ENCODE measurements at regions of chr20 and their contacts with region 1.

Region 1: GRCh38 chr20:9068851-9069663 is at the start of gene PLCB4:
- DNase-seq: peak; percentile 66
- ATAC-seq: peak; percentile 28
- H3K4me3 ChIP-seq: peak within 1 kb of the TSS; percentile 92
- H3K27ac ChIP-seq: peak within 1 kb of the TSS; percentile 68
- H3K4me1 ChIP-seq: peaks cover 6% of the 10 kb centered on the region
- H3K27me3 ChIP-seq: no peaks in the 10 kb centered on the region
- CTCF ChIP-seq: no peak
- POLR2A ChIP-seq: 0 out of 2 replicates have a peak, but pooled peaks have one; percentile 13
- RAD21 ChIP-seq: no peak
- total RNA-seq, gene PLCB4: 24.0 and 28.3 TPM in 2 replicates

Region 2: GRCh38 chr20:8756410-8756809 is 312.6 kb before region 1 on chr20:
- CTCF ChIA-PET with region 1: interaction called, 4 read pairs
- POLR2A ChIA-PET with region 1: no interaction called
- dilution Hi-C with region 1: no loop called
- in situ Hi-C with region 1: no loop called
- intact Hi-C with region 1: loop called (anchors 5 kb)
- DNase-seq: peak; percentile 96
- ATAC-seq: peak; percentile 82
- H3K4me3 ChIP-seq: no peak overlapping the region
- H3K27ac ChIP-seq: no peak overlapping the region
- H3K4me1 ChIP-seq: peaks cover 11% of the 10 kb centered on the region
- H3K27me3 ChIP-seq: no peaks in the 10 kb centered on the region
- CTCF ChIP-seq: no peak
- POLR2A ChIP-seq: no peak
- RAD21 ChIP-seq: no peak

Region 3: DNA sequence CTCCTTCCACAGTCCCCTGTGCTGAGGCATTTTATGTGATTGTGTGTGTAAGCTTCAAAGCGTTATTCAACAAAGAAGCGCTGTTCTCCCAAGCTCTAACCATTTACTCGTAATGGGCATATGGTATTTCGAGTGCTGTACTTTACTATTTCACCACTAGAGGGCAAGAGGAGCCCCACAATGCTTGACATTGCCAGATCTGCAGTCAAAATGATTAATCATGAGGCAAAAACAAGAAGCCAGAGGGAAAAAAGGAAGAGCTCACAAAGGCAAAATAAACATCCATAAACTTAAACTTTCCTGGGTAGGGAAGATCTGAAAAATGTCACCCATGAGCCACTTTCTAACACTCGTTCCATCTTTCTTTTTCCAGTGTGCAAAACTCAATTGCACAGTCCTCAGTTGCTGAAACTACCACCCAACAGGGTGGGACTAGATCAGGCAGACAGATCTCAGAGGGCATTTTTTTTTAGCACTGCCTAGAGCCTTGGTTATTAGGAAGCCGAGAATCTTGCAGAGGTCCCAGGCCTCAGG is 215.2 kb before region 1 on chr20:
- CTCF ChIA-PET with region 1: interaction called, 26 read pairs
- POLR2A ChIA-PET with region 1: no interaction called
- dilution Hi-C with region 1: no loop called
- in situ Hi-C with region 1: no loop called
- intact Hi-C with region 1: loop called (anchors 1 kb)
- DNase-seq: peak; percentile 84
- ATAC-seq: peak; percentile 82
- H3K4me3 ChIP-seq: peak overlapping the region; percentile 2; the same call in 1 of the 2 replicates
- H3K27ac ChIP-seq: peak overlapping the region; percentile 88
- H3K4me1 ChIP-seq: peaks cover 15% of the 10 kb centered on the region
- H3K27me3 ChIP-seq: no peaks in the 10 kb centered on the region
- CTCF ChIP-seq: peak; percentile 87
- POLR2A ChIP-seq: 0 out of 2 replicates have a peak, but pooled peaks have one; percentile 36
- RAD21 ChIP-seq: peak; percentile 90

Region 4: DNA sequence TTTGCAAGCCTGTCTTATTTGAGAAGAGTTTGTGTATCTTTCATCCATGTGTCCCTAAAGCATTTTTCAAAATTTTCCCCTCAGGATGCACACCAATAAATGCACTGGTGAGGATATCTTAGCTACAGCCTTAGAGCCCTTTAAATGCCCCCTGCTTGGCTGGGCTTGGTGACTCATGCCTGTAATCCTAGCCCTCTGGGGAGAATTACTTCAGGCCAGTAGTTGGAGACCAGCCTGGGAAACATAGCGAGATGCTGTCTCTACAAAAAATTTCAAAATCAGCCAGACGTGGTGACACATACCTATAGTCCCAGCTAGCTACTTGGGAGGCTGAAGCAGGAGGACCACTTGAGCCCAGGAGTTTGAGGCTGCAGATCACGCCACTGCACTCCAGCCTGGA is 33.9 kb before region 1 on chr20:
- CTCF ChIA-PET with region 1: no interaction called
- POLR2A ChIA-PET with region 1: no interaction called
- dilution Hi-C with region 1: no loop called
- in situ Hi-C with region 1: no loop called
- intact Hi-C with region 1: loop called (anchors 2 kb)
- DNase-seq: peak; percentile 94
- ATAC-seq: peak; percentile 86
- H3K4me3 ChIP-seq: no peak overlapping the region
- H3K27ac ChIP-seq: no peak overlapping the region; the same call in 1 of the 2 replicates
- H3K4me1 ChIP-seq: peaks cover 13% of the 10 kb centered on the region
- H3K27me3 ChIP-seq: no peaks in the 10 kb centered on the region
- CTCF ChIP-seq: no peak
- POLR2A ChIP-seq: no peak
- RAD21 ChIP-seq: 0 out of 2 replicates have a peak, but pooled peaks have one; percentile 18

Region 5: GRCh38 chr20:9081423-9081966 is 12.4 kb after region 1 on chr20:
- CTCF ChIA-PET with region 1: interaction called, 3 read pairs
- POLR2A ChIA-PET with region 1: interaction called, 12 read pairs
- dilution Hi-C with region 1: no loop called
- in situ Hi-C with region 1: no loop called
- intact Hi-C with region 1: no loop called
- DNase-seq: peak; percentile 28
- ATAC-seq: peak; percentile 48; the same call in 1 of the 2 replicates
- H3K4me3 ChIP-seq: no peak overlapping the region
- H3K27ac ChIP-seq: no peak overlapping the region
- H3K4me1 ChIP-seq: peaks cover 8% of the 10 kb centered on the region
- H3K27me3 ChIP-seq: no peaks in the 10 kb centered on the region
- CTCF ChIP-seq: no peak
- POLR2A ChIP-seq: no peak
- RAD21 ChIP-seq: no peak

Region 6: GRCh38 chr20:9359561-9360308 is 290.7 kb after region 1 on chr20:
- CTCF ChIA-PET with region 1: no interaction called
- POLR2A ChIA-PET with region 1: no interaction called
- dilution Hi-C with region 1: no loop called
- in situ Hi-C with region 1: no loop called
- intact Hi-C with region 1: loop called (anchors 2 kb)
- DNase-seq: peak; percentile 70
- ATAC-seq: peak; percentile 54
- H3K4me3 ChIP-seq: no peak overlapping the region
- H3K27ac ChIP-seq: no peak overlapping the region
- H3K4me1 ChIP-seq: peaks cover 5% of the 10 kb centered on the region
- H3K27me3 ChIP-seq: no peaks in the 10 kb centered on the region
- CTCF ChIP-seq: peak; percentile 61
- POLR2A ChIP-seq: no peak
- RAD21 ChIP-seq: peak; percentile 77

Measured in IMR-90 (cell line).